ENCODE measurements at regions of chr10 and their contacts with region 1.

Region 1: DNA sequence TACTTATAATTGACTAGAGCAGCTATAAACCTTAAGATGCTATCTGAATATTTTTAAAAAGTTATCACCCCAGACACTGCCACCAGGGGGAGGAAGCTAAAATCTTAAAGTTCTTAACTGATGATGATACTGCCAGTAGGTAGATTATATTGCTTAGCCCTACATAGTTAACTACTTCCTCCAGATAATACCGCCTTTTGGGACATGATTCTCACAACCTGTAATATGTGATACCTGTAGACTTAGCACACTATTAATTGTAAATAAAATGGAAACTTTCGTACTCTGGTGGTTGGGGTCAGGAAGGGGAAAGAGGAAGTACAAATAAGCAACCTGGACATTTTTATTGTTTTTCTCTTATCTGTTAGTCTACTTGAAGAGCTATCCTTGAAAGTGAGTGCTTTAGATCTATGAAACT is 268.9 kb downstream of the ADK start:
- DNase-seq: peak in 29 of 35 experiments; percentile 3 to 58 (median 29)
- ATAC-seq: peak in 2 of 4 experiments; percentile 43 to 55
- H3K4me3 ChIP-seq: no peak overlapping the region
- H3K4me3 Mint-ChIP-seq: no peak overlapping the region
- H3K27ac ChIP-seq: no peak overlapping the region
- H3K27ac Mint-ChIP-seq: no peak overlapping the region
- H3K4me1 ChIP-seq: no peaks in the 10 kb centered on the region
- H3K4me1 Mint-ChIP-seq: peaks cover 5 to 11% (median 6%) of the 10 kb centered on the region in 3 donors
- H3K27me3 ChIP-seq: no peaks in the 10 kb centered on the region
- H3K27me3 Mint-ChIP-seq: no peaks in the 10 kb centered on the region

Region 2: GRCh38 chr10:74293686-74294371 is 126.1 kb before region 1 on chr10:
- CTCF ChIA-PET with region 1: no interaction called
- POLR2A ChIA-PET with region 1: interaction called, 6 to 13 read pairs
- DNase-seq: no peak
- ATAC-seq: no peak
- H3K4me3 ChIP-seq: no peak overlapping the region
- H3K4me3 Mint-ChIP-seq: no peak overlapping the region
- H3K27ac ChIP-seq: no peak overlapping the region
- H3K27ac Mint-ChIP-seq: no peak overlapping the region
- H3K4me1 ChIP-seq: no peaks in the 10 kb centered on the region
- H3K4me1 Mint-ChIP-seq: peaks cover 14 to 32% (median 27%) of the 10 kb centered on the region in 3 donors
- H3K27me3 ChIP-seq: no peaks in the 10 kb centered on the region
- H3K27me3 Mint-ChIP-seq: no peaks in the 10 kb centered on the region

Region 3: DNA sequence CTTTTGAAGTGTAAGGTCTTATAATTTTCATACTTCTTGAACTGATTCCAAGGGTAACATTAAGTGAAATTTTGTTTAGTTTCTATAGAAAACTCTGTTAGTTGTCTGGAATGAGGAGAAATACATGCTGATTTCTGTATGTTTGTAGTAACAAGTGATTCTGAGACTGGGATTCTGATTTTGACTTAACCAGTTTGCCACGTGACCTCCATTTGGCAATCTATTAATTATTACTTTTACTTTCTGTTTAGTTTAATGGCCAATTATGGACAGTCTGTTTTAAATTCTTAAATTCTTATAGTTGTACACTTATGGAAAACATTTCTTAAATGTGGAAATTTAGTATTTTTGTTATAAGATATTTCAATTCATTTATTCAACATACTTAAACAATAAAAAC is 105.8 kb before region 1 on chr10:
- CTCF ChIA-PET with region 1: no interaction called
- POLR2A ChIA-PET with region 1: no interaction called
- DNase-seq: peak in 1 of 35 experiments; percentile 17
- ATAC-seq: no peak
- H3K4me3 ChIP-seq: no peak overlapping the region
- H3K4me3 Mint-ChIP-seq: no peak overlapping the region
- H3K27ac ChIP-seq: no peak overlapping the region
- H3K27ac Mint-ChIP-seq: no peak overlapping the region
- H3K4me1 ChIP-seq: no peaks in the 10 kb centered on the region
- H3K4me1 Mint-ChIP-seq: peaks cover 12 to 20% (median 13%) of the 10 kb centered on the region in 3 donors
- H3K27me3 ChIP-seq: no peaks in the 10 kb centered on the region
- H3K27me3 Mint-ChIP-seq: no peaks in the 10 kb centered on the region

Region 4: GRCh38 chr10:74377476-74377875 is 42.5 kb before region 1 on chr10:
- CTCF ChIA-PET with region 1: no interaction called
- POLR2A ChIA-PET with region 1: no interaction called
- DNase-seq: no peak
- ATAC-seq: no peak
- H3K4me3 ChIP-seq: no peak overlapping the region
- H3K4me3 Mint-ChIP-seq: no peak overlapping the region
- H3K27ac ChIP-seq: no peak overlapping the region
- H3K27ac Mint-ChIP-seq: no peak overlapping the region
- H3K4me1 ChIP-seq: peaks cover 0 to 10% of the 10 kb centered on the region in 2 experiments
- H3K4me1 Mint-ChIP-seq: peaks cover 20 to 39% (median 23%) of the 10 kb centered on the region in 3 donors
- H3K27me3 ChIP-seq: no peaks in the 10 kb centered on the region
- H3K27me3 Mint-ChIP-seq: no peaks in the 10 kb centered on the region

Region 5: GRCh38 chr10:74460812-74461211 is 40.8 kb after region 1 on chr10:
- CTCF ChIA-PET with region 1: no interaction called
- POLR2A ChIA-PET with region 1: no interaction called
- DNase-seq: no peak
- ATAC-seq: no peak
- H3K4me3 ChIP-seq: no peak overlapping the region
- H3K4me3 Mint-ChIP-seq: no peak overlapping the region
- H3K27ac ChIP-seq: no peak overlapping the region
- H3K27ac Mint-ChIP-seq: no peak overlapping the region
- H3K4me1 ChIP-seq: no peaks in the 10 kb centered on the region
- H3K4me1 Mint-ChIP-seq: peaks cover 1 to 11% (median 2%) of the 10 kb centered on the region in 3 donors
- H3K27me3 ChIP-seq: no peaks in the 10 kb centered on the region
- H3K27me3 Mint-ChIP-seq: no peaks in the 10 kb centered on the region

Region 6: GRCh38 chr10:74548676-74549075 is 128.7 kb after region 1 on chr10:
- CTCF ChIA-PET with region 1: no interaction called
- POLR2A ChIA-PET with region 1: no interaction called
- DNase-seq: no peak
- ATAC-seq: no peak
- H3K4me3 ChIP-seq: no peak overlapping the region
- H3K4me3 Mint-ChIP-seq: no peak overlapping the region
- H3K27ac ChIP-seq: no peak overlapping the region
- H3K27ac Mint-ChIP-seq: no peak overlapping the region
- H3K4me1 ChIP-seq: no peaks in the 10 kb centered on the region
- H3K4me1 Mint-ChIP-seq: peaks cover 0 to 6% (median 5%) of the 10 kb centered on the region in 3 donors
- H3K27me3 ChIP-seq: no peaks in the 10 kb centered on the region
- H3K27me3 Mint-ChIP-seq: no peaks in the 10 kb centered on the region